ENCODE measurements at regions of chr14 and their contacts with region 1.

Region 1: GRCh38 chr14:75307700-75308379 is 29.2 kb downstream of the FOS start:
- DNase-seq: peak; percentile 59
- CTCF ChIP-seq: peak; percentile 87

Region 2: DNA sequence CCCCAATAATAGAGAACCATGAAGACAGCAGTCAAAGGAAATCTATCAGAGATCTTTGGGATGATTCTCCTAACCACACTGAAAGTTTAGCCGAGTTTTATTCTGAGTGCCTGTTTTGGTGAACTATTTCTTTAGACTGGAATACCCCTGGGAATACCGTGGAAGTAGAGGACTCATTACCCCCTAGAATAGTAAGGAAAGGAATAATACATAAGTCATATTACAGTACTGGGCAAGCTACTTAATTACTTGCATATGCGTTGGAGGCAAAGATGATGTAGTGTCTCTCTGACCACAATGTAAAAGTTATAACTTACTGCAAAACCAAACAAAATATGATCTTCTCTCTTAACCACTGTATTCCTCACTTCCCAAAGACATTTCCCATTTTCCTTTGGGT is 212.9 kb before region 1 on chr14:
- CTCF ChIA-PET with region 1: no interaction called
- POLR2A ChIA-PET with region 1: no interaction called
- DNase-seq: no peak
- CTCF ChIP-seq: no peak

Region 3: DNA sequence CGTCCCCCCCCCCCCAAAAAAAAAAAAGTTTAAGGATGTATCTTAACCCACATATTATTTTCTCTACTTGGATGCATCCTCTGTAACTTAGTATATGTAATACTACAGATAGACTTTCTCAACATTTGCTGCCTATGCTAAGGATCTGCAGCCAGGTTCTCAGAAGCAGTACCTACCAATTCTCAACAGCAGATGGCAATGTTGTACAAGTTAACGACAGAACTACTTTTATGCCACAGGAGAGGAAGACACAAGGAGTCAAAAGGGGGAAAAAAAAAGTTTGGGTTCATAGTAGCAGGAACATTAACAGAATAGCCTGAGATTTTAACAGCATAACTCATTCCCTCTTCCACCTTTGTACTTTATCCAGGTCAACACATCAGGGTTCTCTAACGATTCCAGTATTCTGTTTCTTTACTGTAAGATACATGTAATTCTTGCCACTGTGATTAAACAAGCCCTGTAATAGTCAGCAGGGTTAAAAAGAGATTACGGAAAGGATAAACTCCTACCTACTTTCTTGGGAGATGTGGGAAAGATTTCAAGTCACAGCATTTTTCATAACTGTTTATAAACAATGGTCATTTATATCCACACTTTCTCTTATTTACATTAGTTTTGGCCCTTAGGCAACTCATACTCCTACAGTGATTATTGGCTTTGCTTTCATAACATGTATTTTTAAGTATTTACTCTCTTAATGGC is 175.3 kb before region 1 on chr14:
- CTCF ChIA-PET with region 1: interaction called, 102 read pairs
- POLR2A ChIA-PET with region 1: no interaction called
- DNase-seq: peak; percentile 40
- CTCF ChIP-seq: peak; percentile 72

Region 4: DNA sequence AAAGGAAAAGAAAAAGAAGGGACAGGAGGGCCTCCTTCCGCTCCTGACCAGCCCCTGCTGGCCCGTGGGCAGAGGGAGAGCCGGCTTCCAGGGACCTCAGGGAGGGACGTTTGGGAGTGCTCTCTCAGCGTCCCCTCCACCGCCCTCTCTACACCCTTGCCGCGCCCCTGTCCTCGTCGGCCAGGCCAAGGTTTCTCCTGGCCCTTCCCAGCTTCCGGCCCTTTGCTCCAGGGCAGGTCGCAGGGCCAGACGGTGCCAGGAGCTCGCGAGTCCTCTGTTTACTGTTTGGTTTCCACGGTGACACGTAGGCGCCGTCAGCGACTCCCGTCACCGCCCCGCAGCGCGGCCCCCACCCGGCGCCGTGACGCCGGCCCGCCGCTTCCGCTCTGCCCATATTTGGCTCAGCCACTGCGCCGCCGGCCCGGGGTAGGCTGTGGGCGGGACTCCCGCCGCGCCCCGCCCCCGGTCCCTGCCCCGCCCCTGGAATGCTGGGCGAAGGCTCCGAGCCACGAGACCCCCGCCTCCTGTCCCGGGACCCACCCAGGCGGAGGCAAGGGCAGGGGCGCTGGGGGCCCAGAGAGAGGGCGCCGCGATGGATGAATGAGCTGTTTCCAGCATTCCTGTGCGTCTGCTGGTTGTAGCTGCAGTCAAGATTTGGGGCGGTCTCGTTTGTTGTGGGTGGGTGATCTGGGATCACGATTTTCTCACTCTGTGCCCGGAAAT is 13.8 kb before region 1 on chr14:
- CTCF ChIA-PET with region 1: interaction called, 43 read pairs
- POLR2A ChIA-PET with region 1: interaction called, 3 read pairs
- DNase-seq: peak; percentile 99
- CTCF ChIP-seq: no peak

Region 5: GRCh38 chr14:75452900-75453747 is 145.3 kb after region 1 on chr14:
- CTCF ChIA-PET with region 1: interaction called, 119 read pairs
- POLR2A ChIA-PET with region 1: no interaction called
- DNase-seq: no peak
- CTCF ChIP-seq: no peak